Astrocyte of the cerebellum (primary cell): ENCODE measurements at regions of chr14 and their contacts with region 1.

Region 1: GRCh38 chr14:92297818-92298595 is 25.0 kb upstream of the SLC24A4 start:
- DNase-seq: no peak
- H3K4me3 ChIP-seq: no peak overlapping the region
- CTCF ChIP-seq: no peak

Region 2: DNA sequence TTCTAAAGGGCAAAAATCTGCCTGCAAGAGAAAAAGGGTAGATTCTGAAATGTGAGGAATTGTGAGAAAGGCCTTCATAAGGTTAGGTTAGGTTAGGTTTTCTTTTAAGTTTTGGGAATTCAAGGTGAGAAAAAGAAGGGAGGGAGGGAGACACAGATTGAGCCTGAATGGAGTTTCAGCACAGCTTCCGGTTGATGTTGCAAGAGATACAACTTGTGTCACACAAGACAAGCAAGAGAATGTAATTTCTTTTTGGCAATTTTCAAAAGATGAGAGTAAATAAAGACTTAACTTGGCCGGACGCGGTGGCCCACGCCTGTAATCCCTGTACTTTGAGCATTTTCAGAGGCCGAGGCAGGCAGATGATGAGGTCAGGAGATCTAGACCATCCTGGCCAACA is 112.4 kb before region 1 on chr14:
- in situ Hi-C with region 1: no loop called
- DNase-seq: no peak
- H3K4me3 ChIP-seq: no peak overlapping the region
- CTCF ChIP-seq: no peak

Region 3: DNA sequence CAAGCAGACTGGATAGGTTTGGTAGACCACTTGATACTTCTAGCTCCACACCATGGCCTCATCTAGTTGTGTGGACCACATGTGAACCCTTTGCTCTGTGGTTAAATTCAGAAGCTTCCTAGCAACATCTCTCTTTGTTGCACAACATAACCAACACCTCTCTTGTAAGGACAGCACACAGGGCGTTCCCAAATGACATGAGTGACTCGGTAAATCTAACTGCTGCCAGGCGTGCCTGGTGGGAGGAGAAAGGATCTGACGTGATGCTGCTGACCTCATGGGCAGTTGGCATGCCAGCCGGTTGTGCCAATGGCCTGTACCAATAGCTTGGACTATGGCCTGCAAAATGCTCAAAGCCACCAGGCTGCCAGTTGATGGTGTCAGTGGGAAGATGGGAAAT is 82.4 kb before region 1 on chr14:
- in situ Hi-C with region 1: loop called (anchors 5 kb)
- DNase-seq: no peak
- H3K4me3 ChIP-seq: no peak overlapping the region
- CTCF ChIP-seq: no peak